HCT116 (cell line): ENCODE measurements at regions of chr19 and their contacts with region 1.

Region 1: DNA sequence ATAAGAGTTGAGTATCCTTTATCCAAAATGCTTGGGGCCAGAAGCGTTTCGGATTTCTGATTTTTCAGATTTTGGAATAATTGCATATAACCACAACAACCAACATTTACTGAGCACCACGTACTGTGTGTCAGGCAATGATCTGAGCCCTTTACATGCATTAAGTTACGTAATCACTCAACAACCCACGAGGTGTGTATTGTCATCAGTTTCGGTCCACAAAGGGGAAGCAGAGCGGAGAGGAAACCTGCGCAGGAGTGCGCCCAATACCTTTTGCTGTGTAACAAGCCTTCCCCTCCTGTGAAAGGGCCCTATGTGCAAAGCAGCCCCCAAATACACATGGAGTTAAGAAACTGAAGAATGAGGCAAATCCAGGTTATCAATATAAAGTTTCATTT is 20.7 kb upstream of the NLRP12 start:
- DNase-seq: no peak
- ATAC-seq: no peak
- H3K4me3 ChIP-seq: no peak overlapping the region
- H3K27ac ChIP-seq: no peak overlapping the region
- H3K4me1 ChIP-seq: peaks cover 14 to 37% of the 10 kb centered on the region in 2 experiments
- H3K27me3 ChIP-seq: no peaks in the 10 kb centered on the region
- CTCF ChIP-seq: no peak
- POLR2A ChIP-seq: no peak
- RAD21 ChIP-seq: no peak

Region 2: GRCh38 chr19:54017261-54017660 is 172.4 kb after region 1 on chr19:
- CTCF ChIA-PET with region 1: no interaction called
- POLR2A ChIA-PET with region 1: no interaction called
- RAD21 ChIA-PET with region 1: no interaction called
- intact Hi-C with region 1: loop called (anchors 1 kb)
- DNase-seq: no peak
- ATAC-seq: no peak
- H3K4me3 ChIP-seq: no peak overlapping the region
- H3K27ac ChIP-seq: no peak overlapping the region
- H3K4me1 ChIP-seq: peaks cover 12 to 16% of the 10 kb centered on the region in 2 experiments
- H3K27me3 ChIP-seq: no peaks in the 10 kb centered on the region
- CTCF ChIP-seq: no peak
- POLR2A ChIP-seq: no peak
- RAD21 ChIP-seq: no peak

Region 3: DNA sequence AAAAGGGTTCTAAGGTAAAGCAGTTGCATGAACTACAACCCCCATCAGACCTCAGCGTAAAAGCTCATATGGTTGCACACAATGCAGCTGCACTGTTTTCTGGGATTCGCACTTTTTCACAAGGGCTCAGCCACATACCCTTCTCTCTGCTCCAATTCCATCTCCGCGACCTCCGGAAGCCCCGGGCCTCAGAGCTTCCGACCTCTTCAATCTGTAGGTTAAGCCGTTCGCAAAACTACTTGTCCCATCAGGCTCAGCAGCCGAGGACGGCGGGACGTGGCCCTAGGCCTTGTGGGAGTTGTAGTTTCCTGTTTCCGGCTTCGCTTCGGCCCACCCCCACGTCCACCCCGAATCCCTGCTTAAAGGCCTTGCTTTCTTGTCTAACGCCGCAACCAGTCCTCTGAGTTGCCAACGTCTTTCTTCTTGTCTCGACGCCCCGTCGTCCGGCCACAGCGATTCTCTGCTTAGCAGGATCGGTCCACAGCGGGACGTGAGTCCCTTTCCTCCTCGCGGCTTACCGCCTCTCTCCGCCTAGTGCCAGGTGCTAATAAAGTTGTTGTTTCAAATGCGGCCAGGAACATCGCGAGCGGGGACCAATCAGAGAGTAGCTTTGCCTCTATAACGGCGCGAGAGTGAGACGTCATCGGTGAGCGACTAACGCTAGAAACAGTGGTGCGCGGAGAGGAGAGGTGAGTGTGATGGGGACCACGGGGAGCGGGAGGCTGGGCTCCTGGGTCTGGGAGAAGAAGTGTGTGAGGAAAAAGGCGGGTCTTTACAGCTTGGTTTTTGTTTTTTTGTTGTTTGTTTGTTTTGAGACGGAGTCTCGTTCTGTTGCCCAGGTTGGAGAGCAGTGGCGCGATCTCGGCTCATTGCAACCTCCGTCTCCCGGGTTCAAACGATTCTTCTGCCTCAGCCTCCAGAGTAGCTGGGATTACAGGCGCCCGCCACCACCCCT is 270.5 kb after region 1 on chr19 and contains the starts of genes PRPF31 and TFPT:
- CTCF ChIA-PET with region 1: no interaction called
- POLR2A ChIA-PET with region 1: no interaction called
- RAD21 ChIA-PET with region 1: no interaction called
- intact Hi-C with region 1: loop called (anchors 5 kb)
- DNase-seq: peak; percentile 97
- ATAC-seq: peak; percentile 93
- H3K4me3 ChIP-seq: peak within 1 kb of the TSS; percentile 89 to 91
- H3K27ac ChIP-seq: peak within 1 kb of the TSS; percentile 60
- H3K4me1 ChIP-seq: peaks cover 8 to 19% of the 10 kb centered on the region in 2 experiments; a peak in 3 of 4 replicates
- H3K27me3 ChIP-seq: no peaks in the 10 kb centered on the region
- CTCF ChIP-seq: no peak
- POLR2A ChIP-seq: peak; percentile 28
- RAD21 ChIP-seq: no peak
- total RNA-seq, gene PRPF31: 99.0 TPM
- total RNA-seq, gene TFPT: 7.1 TPM